Naive thymus-derived CD4-positive, alpha-beta T cell (primary cell): ENCODE measurements at regions of chr20 and their contacts with region 1.

Region 1: GRCh38 chr20:62926239-62927104 is at the start of gene DIDO1:
- DNase-seq: peak; percentile 81 to 93 (median 89)
- ATAC-seq: peak; percentile 92
- H3K4me3 ChIP-seq: peak within 1 kb of the TSS; percentile 84
- H3K4me3 Mint-ChIP-seq: peak within 1 kb of the TSS; percentile 94 to 99 (median 96)
- H3K27ac ChIP-seq: peak within 1 kb of the TSS; percentile 95
- H3K27ac Mint-ChIP-seq: peak within 1 kb of the TSS; percentile 90 to 96 (median 94)
- H3K4me1 ChIP-seq: peaks cover 53 to 57% of the 10 kb centered on the region in 2 donors
- H3K4me1 Mint-ChIP-seq: peaks cover 48 to 74% (median 69%) of the 10 kb centered on the region in 7 donors
- H3K27me3 ChIP-seq: no peaks in the 10 kb centered on the region
- H3K27me3 Mint-ChIP-seq: no peaks in the 10 kb centered on the region
- total RNA-seq, gene DIDO1: 66.1 to 139 (median 77.4) TPM

Region 2: DNA sequence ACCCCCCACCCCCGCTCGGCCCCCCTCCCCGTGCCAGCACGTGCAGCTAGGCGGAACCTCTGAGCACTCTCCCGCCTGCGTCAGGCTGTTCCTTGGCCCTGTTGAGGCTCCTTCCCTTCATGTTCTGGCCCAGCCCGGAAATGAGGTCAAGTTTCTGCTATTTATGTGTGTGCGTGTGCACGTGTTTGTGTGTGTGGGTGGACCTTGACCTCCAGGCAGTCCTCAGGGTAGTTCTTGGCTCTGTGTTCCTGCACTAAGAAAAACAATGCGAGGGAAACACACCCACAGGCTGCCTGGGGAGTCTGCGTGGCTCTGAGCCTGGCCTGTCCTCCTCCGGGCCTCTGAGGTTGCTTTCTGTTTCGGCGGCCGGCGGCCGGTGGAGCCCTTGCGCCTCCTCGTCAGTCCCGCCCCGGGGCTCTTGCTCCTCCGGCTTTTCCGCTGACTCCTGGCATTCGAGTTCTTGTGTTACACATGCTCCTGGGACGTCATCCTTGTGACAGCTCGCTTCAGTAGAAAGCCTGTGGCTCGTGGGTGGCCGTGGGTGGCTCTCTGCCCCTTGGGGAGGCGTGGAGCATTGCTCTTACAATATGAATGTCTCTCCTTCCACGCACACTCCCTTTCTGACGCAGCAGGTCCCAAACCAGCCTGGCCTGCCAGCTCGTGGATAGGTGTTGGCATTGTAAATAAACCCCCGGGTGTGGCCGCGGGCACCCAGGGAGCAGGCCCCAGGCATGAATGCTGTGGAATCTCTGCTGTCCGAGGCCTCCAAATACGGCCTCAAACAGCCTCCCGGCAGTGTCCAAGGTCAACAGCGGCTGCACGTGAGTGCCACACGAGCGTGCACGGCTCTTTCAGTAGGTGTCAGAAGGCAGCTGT is 274.2 kb before region 1 on chr20:
- CTCF ChIA-PET with region 1: no interaction called
- POLR2A ChIA-PET with region 1: no interaction called
- intact Hi-C with region 1: loop called in 1 of 2 experiments (anchors 10 kb)
- DNase-seq: peak; percentile 44 to 80 (median 75)
- ATAC-seq: peak; percentile 78
- H3K4me3 ChIP-seq: peak overlapping the region; percentile 40
- H3K4me3 Mint-ChIP-seq: peak overlapping the region; percentile 80 to 95 (median 84)
- H3K27ac ChIP-seq: peak overlapping the region; percentile 81
- H3K27ac Mint-ChIP-seq: peak overlapping the region; percentile 93 to 99 (median 97)
- H3K4me1 ChIP-seq: peaks cover 17 to 20% of the 10 kb centered on the region in 2 donors
- H3K4me1 Mint-ChIP-seq: peaks cover 11 to 45% (median 30%) of the 10 kb centered on the region in 7 donors
- H3K27me3 ChIP-seq: no peaks in the 10 kb centered on the region
- H3K27me3 Mint-ChIP-seq: no peaks in the 10 kb centered on the region

Region 3: DNA sequence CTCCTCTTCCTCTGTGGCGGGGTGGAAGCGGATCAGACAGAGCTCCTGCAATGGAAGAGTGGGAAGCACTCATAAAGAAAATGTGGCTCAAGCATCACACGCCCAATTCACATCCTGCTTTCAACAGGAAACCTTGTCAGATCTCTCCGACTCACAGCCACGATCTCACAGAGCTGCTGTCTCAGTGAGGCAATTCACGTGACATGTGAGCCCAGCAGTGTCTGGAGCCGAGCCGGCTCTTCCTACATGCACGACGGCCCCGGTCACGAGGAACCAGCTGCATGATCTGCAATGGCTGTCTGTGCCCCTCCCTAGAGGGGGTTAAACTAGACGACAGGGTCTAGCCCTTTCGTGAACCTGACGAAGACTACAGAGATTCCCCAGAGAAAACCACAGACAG is 35.4 kb before region 1 on chr20:
- CTCF ChIA-PET with region 1: interaction called, 5 read pairs
- POLR2A ChIA-PET with region 1: interaction called, 3 read pairs
- intact Hi-C with region 1: loop called in 1 of 2 experiments (anchors 5 kb)
- DNase-seq: peak in 7 of 9 donors; percentile 53 to 76 (median 69)
- ATAC-seq: peak; percentile 60
- H3K4me3 ChIP-seq: peak overlapping the region; percentile 21
- H3K4me3 Mint-ChIP-seq: peak overlapping the region; percentile 48 to 78 (median 66)
- H3K27ac ChIP-seq: peak overlapping the region; percentile 68
- H3K27ac Mint-ChIP-seq: peak overlapping the region; percentile 80 to 97 (median 92)
- H3K4me1 ChIP-seq: peaks cover 0 to 32% of the 10 kb centered on the region in 2 donors
- H3K4me1 Mint-ChIP-seq: peaks cover 14 to 54% (median 47%) of the 10 kb centered on the region in 7 donors
- H3K27me3 ChIP-seq: no peaks in the 10 kb centered on the region
- H3K27me3 Mint-ChIP-seq: no peaks in the 10 kb centered on the region

Region 4: DNA sequence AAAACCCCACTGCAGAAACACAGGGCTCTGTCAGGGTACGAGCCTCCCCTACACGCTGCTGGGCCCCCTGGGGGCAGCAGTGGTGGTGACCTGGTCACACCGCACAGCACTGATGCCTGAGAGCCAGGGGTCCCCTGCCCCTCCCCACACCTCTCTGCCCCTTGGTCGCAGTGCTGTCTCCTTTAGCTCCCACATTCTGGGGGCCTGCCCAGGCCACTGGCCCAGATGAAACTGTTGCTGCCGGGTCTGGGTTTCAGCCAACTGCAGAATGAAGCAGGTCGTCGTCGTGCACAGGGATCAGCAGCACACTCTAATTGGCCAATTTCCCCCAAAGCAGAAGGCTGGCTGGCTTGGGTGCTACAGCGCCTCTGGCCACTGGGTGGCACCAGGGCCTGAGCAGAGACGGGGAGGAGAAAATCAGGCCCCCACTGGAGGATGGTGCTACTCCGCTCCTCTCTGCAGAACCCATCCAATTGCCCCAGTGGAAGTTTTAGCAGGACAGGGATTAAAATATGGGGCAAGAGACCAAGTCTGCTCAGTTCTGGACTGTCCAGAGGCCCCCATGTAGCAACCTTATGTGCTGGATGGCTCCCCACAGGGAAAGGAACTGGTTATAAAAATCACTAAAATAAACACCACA is 26.3 kb before region 1 on chr20:
- CTCF ChIA-PET with region 1: interaction called, 102 read pairs
- POLR2A ChIA-PET with region 1: interaction called, 20 read pairs
- intact Hi-C with region 1: loop called (anchors 1 kb)
- DNase-seq: peak; percentile 60 to 82 (median 78)
- ATAC-seq: peak; percentile 97
- H3K4me3 ChIP-seq: no peak overlapping the region
- H3K4me3 Mint-ChIP-seq: peak overlapping the region; percentile 54 to 81 (median 69)
- H3K27ac ChIP-seq: peak overlapping the region; percentile 60
- H3K27ac Mint-ChIP-seq: peak overlapping the region; percentile 75 to 95 (median 90)
- H3K4me1 ChIP-seq: peaks cover 13 to 22% of the 10 kb centered on the region in 2 donors
- H3K4me1 Mint-ChIP-seq: peaks cover 23 to 42% (median 34%) of the 10 kb centered on the region in 7 donors
- H3K27me3 ChIP-seq: no peaks in the 10 kb centered on the region
- H3K27me3 Mint-ChIP-seq: no peaks in the 10 kb centered on the region

Region 5: DNA sequence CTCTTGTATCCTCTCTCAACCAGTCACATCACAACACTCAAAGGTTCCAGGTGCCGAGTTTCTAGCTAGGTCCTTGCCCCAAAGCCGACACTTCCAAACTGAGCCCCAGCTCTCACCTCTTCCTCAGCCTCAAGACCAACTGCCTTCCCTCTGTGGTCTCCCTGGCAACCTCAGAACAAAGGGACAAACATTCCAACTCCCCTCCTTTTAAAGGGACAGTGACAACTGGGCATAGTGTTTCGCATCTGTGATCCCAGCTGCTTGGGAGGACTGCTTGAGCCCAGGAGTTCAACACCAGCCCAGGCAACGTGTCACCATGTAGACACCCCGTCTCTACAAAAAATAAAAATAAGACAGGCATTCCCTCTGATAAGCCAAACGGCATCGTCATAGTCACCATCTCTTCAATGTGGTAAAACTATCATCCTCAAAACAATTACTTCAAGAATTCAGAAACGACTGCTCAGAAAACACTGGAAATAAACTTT is 11.5 kb before region 1 on chr20:
- CTCF ChIA-PET with region 1: no interaction called
- POLR2A ChIA-PET with region 1: interaction called, 25 read pairs
- intact Hi-C with region 1: no loop called
- DNase-seq: peak in 3 of 9 donors; percentile 32 to 41 (median 37)
- ATAC-seq: peak; percentile 48
- H3K4me3 ChIP-seq: no peak overlapping the region
- H3K4me3 Mint-ChIP-seq: peak overlapping the region; percentile 15 to 90 (median 72)
- H3K27ac ChIP-seq: peak overlapping the region; percentile 57
- H3K27ac Mint-ChIP-seq: peak overlapping the region; percentile 51 to 91 (median 82)
- H3K4me1 ChIP-seq: peaks cover 53 to 55% of the 10 kb centered on the region in 2 donors
- H3K4me1 Mint-ChIP-seq: peaks cover 54 to 90% (median 82%) of the 10 kb centered on the region in 7 donors
- H3K27me3 ChIP-seq: no peaks in the 10 kb centered on the region
- H3K27me3 Mint-ChIP-seq: no peaks in the 10 kb centered on the region

Region 6: GRCh38 chr20:62937366-62938104 is 11.1 kb after region 1 on chr20:
- CTCF ChIA-PET with region 1: interaction called, 13 read pairs
- POLR2A ChIA-PET with region 1: interaction called, 84 read pairs
- intact Hi-C with region 1: loop called (anchors 1 kb)
- DNase-seq: peak; percentile 96 to 98 (median 97)
- ATAC-seq: peak; percentile 95
- H3K4me3 ChIP-seq: peak overlapping the region; percentile 94
- H3K4me3 Mint-ChIP-seq: peak overlapping the region in 6 of 10 donors; percentile 94 to 98 (median 96)
- H3K27ac ChIP-seq: peak overlapping the region; percentile 97
- H3K27ac Mint-ChIP-seq: peak overlapping the region; percentile 88 to 98 (median 95)
- H3K4me1 ChIP-seq: peaks cover 34 to 37% of the 10 kb centered on the region in 2 donors
- H3K4me1 Mint-ChIP-seq: peaks cover 26 to 51% (median 40%) of the 10 kb centered on the region in 7 donors
- H3K27me3 ChIP-seq: no peaks in the 10 kb centered on the region
- H3K27me3 Mint-ChIP-seq: no peaks in the 10 kb centered on the region

Region 7: GRCh38 chr20:63101781-63102719 is 175.6 kb after region 1 on chr20:
- CTCF ChIA-PET with region 1: no interaction called
- POLR2A ChIA-PET with region 1: interaction called, 3 read pairs
- intact Hi-C with region 1: loop called in 1 of 2 experiments (anchors 10 kb)
- DNase-seq: peak; percentile 53 to 84 (median 80)
- ATAC-seq: peak; percentile 76
- H3K4me3 ChIP-seq: peak overlapping the region; percentile 84
- H3K4me3 Mint-ChIP-seq: peak overlapping the region; percentile 86 to 95 (median 92)
- H3K27ac ChIP-seq: peak overlapping the region; percentile 88
- H3K27ac Mint-ChIP-seq: peak overlapping the region; percentile 90 to 99 (median 96)
- H3K4me1 ChIP-seq: no peaks in the 10 kb centered on the region
- H3K4me1 Mint-ChIP-seq: peaks cover 0 to 8% (median 5%) of the 10 kb centered on the region in 7 donors
- H3K27me3 ChIP-seq: no peaks in the 10 kb centered on the region
- H3K27me3 Mint-ChIP-seq: no peaks in the 10 kb centered on the region